ENCODE measurements at regions of chr11 and their contacts with region 1.

Region 1: DNA sequence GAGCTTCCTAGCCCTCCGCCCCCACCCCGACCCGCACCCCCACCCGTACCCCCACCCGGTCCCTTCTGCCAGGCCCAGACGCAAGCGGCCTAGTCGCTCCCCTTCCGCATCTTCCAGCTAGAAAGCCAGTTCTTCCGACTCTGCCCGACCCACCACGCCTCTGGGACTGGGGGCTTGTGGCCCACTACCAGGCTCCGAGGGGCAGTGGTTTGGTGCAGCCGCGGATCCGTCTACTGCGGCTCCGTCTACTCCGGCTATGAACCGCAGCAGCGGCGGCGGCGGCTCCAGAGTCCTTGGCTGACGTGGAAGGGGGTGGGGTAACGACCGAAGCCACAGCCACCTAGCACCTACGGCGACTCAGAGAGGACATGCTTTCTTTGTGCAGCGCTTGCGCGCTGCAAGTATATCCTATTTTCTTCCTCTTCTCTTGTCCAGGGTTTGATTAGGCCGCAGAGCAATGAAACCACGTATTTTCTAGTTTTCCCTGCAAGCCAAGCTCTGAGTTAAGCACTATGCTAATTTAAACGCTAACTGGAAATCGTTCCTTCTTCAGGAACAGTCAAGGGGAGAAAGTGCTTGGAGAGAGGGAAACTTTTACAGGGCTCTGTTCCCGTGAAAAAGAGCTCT is at the start of gene COPB1:
- DNase-seq: peak; percentile 88 to 95 (median 93)
- H3K4me3 ChIP-seq: peak within 1 kb of the TSS; percentile 93
- H3K4me3 Mint-ChIP-seq: peak within 1 kb of the TSS; percentile 90 to 99 (median 95)
- H3K27ac ChIP-seq: peak within 1 kb of the TSS; percentile 81
- H3K27ac Mint-ChIP-seq: peak within 1 kb of the TSS; percentile 96 to 100 (median 98)
- H3K4me1 ChIP-seq: peaks cover 21% of the 10 kb centered on the region
- H3K4me1 Mint-ChIP-seq: peaks cover 45 to 56% (median 53%) of the 10 kb centered on the region in 3 donors
- H3K27me3 ChIP-seq: no peaks in the 10 kb centered on the region
- H3K27me3 Mint-ChIP-seq: no peaks in the 10 kb centered on the region
- total RNA-seq, gene COPB1: 104 to 111 TPM

Region 2: DNA sequence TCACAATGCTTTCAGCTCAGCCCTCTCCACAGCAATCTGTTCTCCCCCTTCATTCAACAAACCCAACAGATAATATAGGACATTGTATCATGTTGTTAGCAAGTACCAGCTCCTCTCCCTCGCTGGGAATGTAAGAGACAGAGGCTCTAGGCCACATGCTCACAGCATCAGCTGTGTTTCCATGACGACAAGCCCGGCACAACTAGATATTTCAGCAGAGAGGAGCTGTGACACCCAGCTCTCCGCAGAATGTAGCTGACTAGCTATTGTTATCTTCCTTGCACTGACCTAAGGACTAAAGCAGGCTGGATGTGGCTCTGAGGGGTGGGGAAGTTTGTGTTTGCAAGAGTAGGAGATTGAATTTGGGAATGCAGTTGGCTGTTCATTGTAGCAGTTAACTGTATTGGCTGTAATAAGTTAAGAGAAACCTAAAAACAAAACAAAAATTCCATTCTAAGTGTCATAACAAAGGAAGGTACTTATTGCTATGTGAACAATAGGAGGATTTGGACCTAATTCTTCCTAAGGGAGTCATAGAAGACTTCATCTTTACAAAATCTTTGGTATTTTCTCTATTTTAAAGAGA is 112.7 kb before region 1 on chr11:
- CTCF ChIA-PET with region 1: no interaction called
- POLR2A ChIA-PET with region 1: no interaction called
- DNase-seq: no peak
- H3K4me3 ChIP-seq: no peak overlapping the region
- H3K4me3 Mint-ChIP-seq: no peak overlapping the region
- H3K27ac ChIP-seq: no peak overlapping the region
- H3K27ac Mint-ChIP-seq: peak overlapping the region in 2 of 8 donors; percentile 0 to 55
- H3K4me1 ChIP-seq: no peaks in the 10 kb centered on the region
- H3K4me1 Mint-ChIP-seq: peaks cover 0 to 7% (median 0%) of the 10 kb centered on the region in 3 donors
- H3K27me3 ChIP-seq: no peaks in the 10 kb centered on the region
- H3K27me3 Mint-ChIP-seq: peaks cover 0 to 6% of the 10 kb centered on the region in 2 donors

Region 3: GRCh38 chr11:14435717-14436512 is 63.8 kb before region 1 on chr11:
- CTCF ChIA-PET with region 1: no interaction called
- POLR2A ChIA-PET with region 1: no interaction called
- DNase-seq: peak in 1 of 5 donors; percentile 43
- H3K4me3 ChIP-seq: no peak overlapping the region
- H3K4me3 Mint-ChIP-seq: peak overlapping the region in 6 of 7 donors; percentile 21 to 68 (median 46)
- H3K27ac ChIP-seq: no peak overlapping the region
- H3K27ac Mint-ChIP-seq: peak overlapping the region; percentile 6 to 82 (median 60)
- H3K4me1 ChIP-seq: peaks cover 35% of the 10 kb centered on the region
- H3K4me1 Mint-ChIP-seq: peaks cover 45 to 57% (median 53%) of the 10 kb centered on the region in 3 donors
- H3K27me3 ChIP-seq: no peaks in the 10 kb centered on the region
- H3K27me3 Mint-ChIP-seq: no peaks in the 10 kb centered on the region

Region 4: DNA sequence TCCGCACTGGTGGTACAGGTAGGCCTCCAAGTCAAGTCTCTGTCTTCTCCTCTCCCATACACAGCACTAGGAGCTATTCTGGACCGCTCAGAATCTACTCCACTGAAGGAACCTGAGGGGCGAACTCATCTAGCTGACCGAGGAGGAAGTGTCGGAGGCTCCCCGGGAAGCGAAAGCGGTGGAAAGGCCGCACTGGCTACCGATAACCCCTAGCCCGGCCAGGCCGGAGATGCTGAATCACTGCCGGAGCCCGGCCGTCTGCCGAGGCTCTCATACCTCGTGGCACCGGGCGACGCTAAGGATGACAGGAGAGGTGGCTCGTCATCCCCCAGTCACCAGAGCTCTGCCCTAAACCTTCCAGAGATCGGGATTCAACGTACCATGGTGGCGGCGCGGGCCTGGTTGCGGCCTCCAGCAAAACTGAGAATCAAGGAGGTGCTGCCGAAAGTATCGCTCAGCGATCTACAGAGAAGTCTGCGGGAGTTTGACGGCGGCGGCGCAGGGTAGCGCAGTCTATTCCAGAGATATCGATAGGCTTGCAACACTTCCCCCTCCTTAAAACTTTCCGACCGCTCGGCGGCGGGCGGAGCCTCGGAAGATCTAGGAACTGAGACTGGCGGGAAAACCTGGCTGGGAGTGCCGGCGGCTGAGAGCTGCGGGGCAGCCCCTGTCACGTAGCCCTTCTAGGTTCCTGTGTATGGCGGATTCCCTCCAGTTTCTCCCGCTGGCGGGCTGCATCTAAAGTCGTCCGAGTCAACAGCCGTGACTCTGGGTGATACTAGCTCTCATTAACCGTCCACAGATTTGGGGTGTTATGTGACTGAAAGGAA is 20.5 kb after region 1 on chr11 and contains the start of gene PSMA1:
- CTCF ChIA-PET with region 1: interaction called, 7 read pairs
- POLR2A ChIA-PET with region 1: interaction called, 13 read pairs
- DNase-seq: peak; percentile 89 to 93 (median 89)
- H3K4me3 ChIP-seq: peak within 1 kb of the TSS; percentile 93
- H3K4me3 Mint-ChIP-seq: peak within 1 kb of the TSS; percentile 94 to 98 (median 97)
- H3K27ac ChIP-seq: peak within 1 kb of the TSS; percentile 83
- H3K27ac Mint-ChIP-seq: peak within 1 kb of the TSS; percentile 93 to 98 (median 96)
- H3K4me1 ChIP-seq: peaks cover 24% of the 10 kb centered on the region
- H3K4me1 Mint-ChIP-seq: peaks cover 33 to 40% (median 36%) of the 10 kb centered on the region in 3 donors
- H3K27me3 ChIP-seq: no peaks in the 10 kb centered on the region
- H3K27me3 Mint-ChIP-seq: no peaks in the 10 kb centered on the region
- total RNA-seq, gene PSMA1: 337 to 344 TPM